HepG2 (cell line): ENCODE measurements at regions of chr9 and their contacts with region 1.

Region 1: DNA sequence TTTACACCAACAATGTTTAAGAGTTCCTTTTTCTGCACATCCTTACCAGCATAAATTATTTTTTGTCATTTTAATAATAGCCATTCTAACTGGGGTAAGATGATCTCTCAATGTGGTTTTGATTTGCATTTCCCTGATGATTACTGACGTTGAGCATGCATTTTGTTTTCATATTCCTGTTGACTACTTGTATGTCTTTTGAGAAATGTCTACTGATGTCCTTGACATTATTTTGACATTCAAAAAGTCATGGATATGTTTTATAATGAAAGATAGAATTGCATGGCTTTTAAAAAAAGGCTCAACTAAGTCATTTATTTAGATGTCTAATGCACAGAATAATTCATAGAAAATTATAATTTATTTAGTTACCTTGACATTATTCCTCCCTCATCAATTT is 381.6 kb upstream of the C9orf72 start:
- DNase-seq: no peak
- ATAC-seq: no peak
- H3K4me3 ChIP-seq: no peak overlapping the region
- H3K27ac ChIP-seq: no peak overlapping the region
- H3K4me1 ChIP-seq: no peaks in the 10 kb centered on the region
- H3K27me3 ChIP-seq: no peaks in the 10 kb centered on the region
- CTCF ChIP-seq: no peak
- EP300 ChIP-seq: no peak
- POLR2A ChIP-seq: no peak
- RAD21 ChIP-seq: no peak

Region 2: DNA sequence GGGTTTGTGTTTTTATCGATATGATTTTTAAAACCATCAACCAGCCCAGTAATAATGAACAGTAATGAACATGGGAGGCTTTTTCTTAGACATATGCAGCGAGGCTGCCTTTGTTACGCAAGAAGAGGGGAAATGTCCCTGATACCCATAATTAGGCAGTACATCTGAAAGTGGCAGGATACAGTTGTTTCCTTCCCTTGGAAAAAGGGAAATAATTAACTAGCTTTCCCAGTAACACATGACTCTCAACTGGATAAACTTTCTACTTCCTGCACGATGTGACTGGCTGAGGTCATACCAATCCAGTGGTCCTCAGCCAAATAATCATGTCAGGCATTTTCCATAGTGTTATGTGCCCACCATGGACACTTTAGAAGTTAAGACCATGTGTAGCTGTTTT is 50.0 kb after region 1 on chr9:
- CTCF ChIA-PET with region 1: no interaction called
- POLR2A ChIA-PET with region 1: no interaction called
- in situ Hi-C with region 1: no loop called
- intact Hi-C with region 1: loop called (anchors 5 kb)
- DNase-seq: no peak
- ATAC-seq: no peak
- H3K4me3 ChIP-seq: no peak overlapping the region
- H3K27ac ChIP-seq: no peak overlapping the region
- H3K4me1 ChIP-seq: no peaks in the 10 kb centered on the region
- H3K27me3 ChIP-seq: no peaks in the 10 kb centered on the region
- CTCF ChIP-seq: no peak
- EP300 ChIP-seq: no peak
- POLR2A ChIP-seq: no peak
- RAD21 ChIP-seq: no peak

Region 3: GRCh38 chr9:28155067-28155466 is 200.2 kb after region 1 on chr9:
- CTCF ChIA-PET with region 1: no interaction called
- POLR2A ChIA-PET with region 1: no interaction called
- in situ Hi-C with region 1: no loop called
- intact Hi-C with region 1: no loop called
- DNase-seq: no peak
- ATAC-seq: no peak
- H3K4me3 ChIP-seq: no peak overlapping the region
- H3K27ac ChIP-seq: no peak overlapping the region
- H3K4me1 ChIP-seq: no peaks in the 10 kb centered on the region
- H3K27me3 ChIP-seq: no peaks in the 10 kb centered on the region
- CTCF ChIP-seq: no peak
- EP300 ChIP-seq: no peak
- POLR2A ChIP-seq: no peak
- RAD21 ChIP-seq: no peak